ENCODE measurements at regions of chr15 and their contacts with region 1.

Region 1: DNA sequence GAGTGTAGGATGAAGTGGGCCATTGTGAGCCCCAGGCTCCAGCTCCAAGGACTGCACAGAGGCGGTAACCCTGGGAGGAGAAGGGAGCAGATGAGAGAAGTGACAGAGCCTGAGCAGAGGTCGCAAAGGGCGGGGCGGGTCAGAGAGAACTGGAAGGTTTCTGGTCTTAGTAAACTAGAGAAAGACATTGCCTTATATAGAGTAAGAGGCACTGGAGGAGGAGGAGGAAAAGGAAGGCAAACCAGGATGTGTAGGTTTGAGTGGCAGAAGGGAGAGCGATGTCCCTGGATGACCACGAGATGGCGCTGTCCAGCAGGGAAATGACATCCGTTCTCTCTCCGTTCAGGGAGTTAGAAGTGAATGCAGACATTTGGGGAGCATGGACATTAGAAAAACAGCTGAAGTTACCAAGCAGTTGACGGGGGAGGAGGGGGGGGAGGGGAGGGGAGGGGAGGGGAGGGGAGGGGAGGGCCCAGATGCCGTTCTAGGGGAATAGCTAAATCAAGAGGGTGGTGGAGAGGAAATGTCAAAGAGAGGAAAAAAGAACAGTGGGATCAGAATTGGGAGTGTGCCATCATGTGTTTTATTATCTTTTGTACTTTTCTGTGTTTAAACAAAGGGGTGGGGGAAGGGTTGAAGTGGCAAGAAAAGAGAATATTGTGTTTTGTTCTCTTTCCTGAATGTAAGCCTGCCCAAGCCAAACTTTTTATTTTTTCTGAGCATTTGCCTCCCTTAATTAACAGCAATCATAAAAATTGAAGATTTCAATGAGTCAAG is 48.8 kb downstream of the STARD5 start:
- DNase-seq: peak; percentile 82
- ATAC-seq: peak; percentile 99
- H3K4me3 ChIP-seq: no peak overlapping the region
- H3K27ac ChIP-seq: no peak overlapping the region
- H3K4me1 ChIP-seq: 0 out of 2 replicates have a peak, but pooled peaks cover 3% of the 10 kb centered on the region
- H3K27me3 ChIP-seq: no peaks in the 10 kb centered on the region
- CTCF ChIP-seq: peak; percentile 89 to 95 (median 90)
- EP300 ChIP-seq: no peak
- POLR2A ChIP-seq: no peak
- RAD21 ChIP-seq: peak; percentile 100

Region 2: GRCh38 chr15:81091889-81092558 is 183.1 kb before region 1 on chr15:
- CTCF ChIA-PET with region 1: no interaction called
- POLR2A ChIA-PET with region 1: no interaction called
- RAD21 ChIA-PET with region 1: no interaction called
- SMC1A ChIA-PET with region 1: no interaction called
- in situ Hi-C with region 1: no loop called
- intact Hi-C with region 1: no loop called
- DNase-seq: no peak
- ATAC-seq: no peak
- H3K4me3 ChIP-seq: no peak overlapping the region
- H3K27ac ChIP-seq: no peak overlapping the region
- H3K4me1 ChIP-seq: no peaks in the 10 kb centered on the region
- H3K27me3 ChIP-seq: peaks cover 0 to 4% of the 10 kb centered on the region in 2 experiments
- CTCF ChIP-seq: no peak
- EP300 ChIP-seq: no peak
- POLR2A ChIP-seq: no peak
- RAD21 ChIP-seq: no peak

Region 3: GRCh38 chr15:81296673-81297072 is 21.6 kb after region 1 on chr15:
- CTCF ChIA-PET with region 1: interaction called, 66 read pairs
- POLR2A ChIA-PET with region 1: interaction called, 10 read pairs
- RAD21 ChIA-PET with region 1: interaction called, 73 read pairs
- SMC1A ChIA-PET with region 1: interaction called, 109 read pairs
- in situ Hi-C with region 1: no loop called
- intact Hi-C with region 1: loop called (anchors 1 kb)
- DNase-seq: peak; percentile 95
- ATAC-seq: peak; percentile 44
- H3K4me3 ChIP-seq: peak overlapping the region; percentile 75
- H3K27ac ChIP-seq: peak overlapping the region; percentile 99
- H3K4me1 ChIP-seq: peaks cover 60% of the 10 kb centered on the region
- H3K27me3 ChIP-seq: no peaks in the 10 kb centered on the region
- CTCF ChIP-seq: no peak
- EP300 ChIP-seq: peak; percentile 78 to 90; a peak in 3 of 4 replicates
- POLR2A ChIP-seq: peak; percentile 79
- RAD21 ChIP-seq: peak; percentile 19; the same call in 1 of the 2 replicates

Region 4: GRCh38 chr15:81323944-81324881 is 49.1 kb after region 1 on chr15 and contains the start of gene STARD5:
- CTCF ChIA-PET with region 1: interaction called, 50 read pairs
- POLR2A ChIA-PET with region 1: no interaction called
- RAD21 ChIA-PET with region 1: interaction called, 22 read pairs
- SMC1A ChIA-PET with region 1: interaction called, 26 read pairs
- in situ Hi-C with region 1: no loop called
- intact Hi-C with region 1: no loop called
- DNase-seq: peak; percentile 69
- ATAC-seq: peak; percentile 100
- H3K4me3 ChIP-seq: peak within 1 kb of the TSS; percentile 89
- H3K27ac ChIP-seq: peak within 1 kb of the TSS; percentile 32
- H3K4me1 ChIP-seq: peaks cover 8% of the 10 kb centered on the region
- H3K27me3 ChIP-seq: no peaks in the 10 kb centered on the region
- CTCF ChIP-seq: no peak
- EP300 ChIP-seq: no peak
- POLR2A ChIP-seq: peak; percentile 95
- RAD21 ChIP-seq: no peak
- polyA plus RNA-seq, gene STARD5: 2.3 to 3.5 TPM

Region 5: DNA sequence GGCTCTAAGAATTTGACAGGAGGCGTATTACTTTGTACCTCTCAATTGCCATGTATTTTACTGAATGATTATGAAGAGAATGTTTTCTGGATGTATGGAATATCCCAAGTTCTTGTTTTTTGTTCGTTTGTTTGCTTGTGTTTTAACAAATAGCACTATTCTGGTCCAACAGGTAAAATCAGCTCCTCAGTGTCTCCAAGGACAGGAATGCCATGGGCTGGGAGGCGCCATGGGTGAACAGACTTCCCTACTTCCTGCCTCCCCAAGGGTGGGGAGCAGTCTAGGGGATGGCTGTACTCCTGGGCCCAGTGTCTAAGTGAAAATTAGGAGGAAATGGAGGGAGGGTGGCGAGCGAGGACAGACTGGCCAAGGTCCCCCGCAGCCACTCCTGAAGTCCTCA is 67.4 kb after region 1 on chr15:
- CTCF ChIA-PET with region 1: interaction called, 242 read pairs
- POLR2A ChIA-PET with region 1: interaction called, 4 read pairs
- RAD21 ChIA-PET with region 1: interaction called, 137 read pairs
- SMC1A ChIA-PET with region 1: interaction called, 122 read pairs
- in situ Hi-C with region 1: no loop called
- intact Hi-C with region 1: no loop called
- DNase-seq: no peak
- ATAC-seq: no peak
- H3K4me3 ChIP-seq: no peak overlapping the region
- H3K27ac ChIP-seq: no peak overlapping the region
- H3K4me1 ChIP-seq: no peaks in the 10 kb centered on the region
- H3K27me3 ChIP-seq: no peaks in the 10 kb centered on the region
- CTCF ChIP-seq: no peak
- EP300 ChIP-seq: no peak
- POLR2A ChIP-seq: no peak
- RAD21 ChIP-seq: no peak

Region 6: GRCh38 chr15:81473177-81473576 is 198.1 kb after region 1 on chr15:
- CTCF ChIA-PET with region 1: interaction called, 3 read pairs
- POLR2A ChIA-PET with region 1: no interaction called
- RAD21 ChIA-PET with region 1: no interaction called
- SMC1A ChIA-PET with region 1: interaction called, 3 read pairs
- in situ Hi-C with region 1: no loop called
- intact Hi-C with region 1: loop called (anchors 10 kb)
- DNase-seq: no peak
- ATAC-seq: no peak
- H3K4me3 ChIP-seq: no peak overlapping the region
- H3K27ac ChIP-seq: no peak overlapping the region
- H3K4me1 ChIP-seq: no peaks in the 10 kb centered on the region
- H3K27me3 ChIP-seq: no peaks in the 10 kb centered on the region; a peak in 1 of 4 replicates
- CTCF ChIP-seq: no peak
- EP300 ChIP-seq: no peak
- POLR2A ChIP-seq: no peak
- RAD21 ChIP-seq: no peak